Panc1 (cell line): ENCODE measurements at regions of chr5 and their contacts with region 1.

Region 1: GRCh38 chr5:157948738-157949410 is 89.9 kb upstream of the CLINT1 start:
- DNase-seq: peak; percentile 84
- ATAC-seq: peak; percentile 99
- H3K4me3 ChIP-seq: peak overlapping the region in 1 of 2 experiments; percentile 33; a peak in 2 of 4 replicates
- H3K27ac ChIP-seq: no peak overlapping the region
- H3K4me1 ChIP-seq: 0 out of 2 replicates have a peak, but pooled peaks cover 2% of the 10 kb centered on the region
- H3K27me3 ChIP-seq: no peaks in the 10 kb centered on the region
- CTCF ChIP-seq: peak; percentile 92

Region 2: GRCh38 chr5:157820593-157821252 is 128.2 kb before region 1 on chr5:
- CTCF ChIA-PET with region 1: interaction called, 6 read pairs
- POLR2A ChIA-PET with region 1: no interaction called
- in situ Hi-C with region 1: no loop called
- intact Hi-C with region 1: loop called (anchors 5 kb)
- DNase-seq: no peak
- ATAC-seq: no peak
- H3K4me3 ChIP-seq: no peak overlapping the region
- H3K27ac ChIP-seq: no peak overlapping the region
- H3K4me1 ChIP-seq: peaks cover 4% of the 10 kb centered on the region; the same call in 1 of the 2 replicates
- H3K27me3 ChIP-seq: no peaks in the 10 kb centered on the region
- CTCF ChIP-seq: peak; percentile 69; the same call in 1 of the 2 replicates

Region 3: DNA sequence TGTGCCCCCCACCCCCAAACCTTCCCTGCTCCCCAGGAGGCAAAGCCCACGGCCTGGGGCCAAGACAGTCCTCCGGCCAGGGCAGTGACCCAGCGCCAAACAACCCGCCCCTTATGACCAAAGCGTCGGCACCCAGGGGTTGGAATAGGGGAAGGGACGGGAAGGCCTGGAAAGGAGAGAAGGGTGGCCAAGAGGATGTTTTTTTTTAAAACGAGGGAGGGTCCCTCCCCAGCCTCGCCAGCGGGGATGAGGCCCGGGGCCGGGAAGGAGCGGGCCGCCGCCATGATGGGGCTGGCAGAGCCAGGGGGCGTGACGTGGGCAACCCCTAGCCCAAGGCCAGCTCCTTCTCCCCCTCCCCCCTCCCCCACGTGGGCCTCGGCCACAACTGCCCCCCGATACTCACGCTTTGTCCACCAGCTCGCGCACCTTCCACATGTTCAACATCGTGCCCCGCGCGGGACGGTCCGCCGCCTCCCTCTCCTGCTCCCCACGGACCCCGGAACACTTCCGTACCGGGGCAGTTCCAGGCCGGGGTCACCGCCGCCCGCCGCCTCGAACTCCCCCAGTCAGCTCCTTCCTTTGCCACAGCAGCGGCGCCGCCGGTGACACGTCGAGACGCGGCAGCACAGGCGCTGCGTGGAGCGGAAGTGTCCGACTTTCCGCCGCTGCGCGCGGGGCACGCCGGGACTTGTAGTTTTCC is 90.2 kb before region 1 on chr5 and contains the start of gene CLINT1:
- CTCF ChIA-PET with region 1: interaction called, 8 read pairs
- POLR2A ChIA-PET with region 1: interaction called, 3 read pairs
- in situ Hi-C with region 1: no loop called
- intact Hi-C with region 1: loop called (anchors 10 kb)
- DNase-seq: no peak
- ATAC-seq: peak; percentile 100
- H3K4me3 ChIP-seq: peak within 1 kb of the TSS; percentile 93 to 98
- H3K27ac ChIP-seq: peak within 1 kb of the TSS; percentile 90
- H3K4me1 ChIP-seq: peaks cover 6% of the 10 kb centered on the region
- H3K27me3 ChIP-seq: no peaks in the 10 kb centered on the region
- CTCF ChIP-seq: no peak
- total RNA-seq, gene CLINT1: 81.6 TPM

Region 4: DNA sequence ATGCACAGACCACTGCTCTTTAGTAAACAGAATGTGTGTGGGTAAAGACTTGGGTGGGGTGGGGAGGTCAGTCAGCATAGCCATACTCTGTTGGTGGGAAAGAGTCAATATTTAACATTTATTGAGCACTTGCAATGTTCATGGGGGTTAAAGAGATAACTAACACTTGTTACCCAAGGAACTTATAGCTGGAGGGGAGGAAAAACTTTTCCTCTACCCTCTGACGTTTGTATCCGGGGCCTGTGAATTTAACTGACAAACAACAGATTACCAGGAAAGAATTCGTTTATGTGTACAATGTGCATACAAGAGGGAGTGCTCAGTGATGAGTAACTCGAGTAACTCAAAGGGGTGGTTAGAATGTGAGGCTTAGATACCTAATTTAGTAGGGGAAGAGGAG is 83.1 kb before region 1 on chr5:
- CTCF ChIA-PET with region 1: interaction called, 11 read pairs
- POLR2A ChIA-PET with region 1: no interaction called
- in situ Hi-C with region 1: no loop called
- intact Hi-C with region 1: no loop called
- DNase-seq: no peak
- ATAC-seq: no peak
- H3K4me3 ChIP-seq: no peak overlapping the region
- H3K27ac ChIP-seq: no peak overlapping the region
- H3K4me1 ChIP-seq: no peaks in the 10 kb centered on the region
- H3K27me3 ChIP-seq: no peaks in the 10 kb centered on the region
- CTCF ChIP-seq: no peak

Region 5: GRCh38 chr5:158054223-158055110 is 105.6 kb after region 1 on chr5:
- CTCF ChIA-PET with region 1: no interaction called
- POLR2A ChIA-PET with region 1: no interaction called
- in situ Hi-C with region 1: no loop called
- intact Hi-C with region 1: no loop called
- DNase-seq: no peak
- ATAC-seq: no peak
- H3K4me3 ChIP-seq: no peak overlapping the region
- H3K27ac ChIP-seq: no peak overlapping the region
- H3K4me1 ChIP-seq: no peaks in the 10 kb centered on the region
- H3K27me3 ChIP-seq: peaks cover 4% of the 10 kb centered on the region; the same call in 1 of the 2 replicates
- CTCF ChIP-seq: no peak